HCT116 (cell line): ENCODE measurements at regions of chr5 and their contacts with region 1.

Region 1: GRCh38 chr5:150449517-150450339 is at the start of gene RPS14:
- DNase-seq: peak; percentile 89
- ATAC-seq: peak; percentile 88
- H3K4me3 ChIP-seq: peak within 1 kb of the TSS; percentile 94 to 96
- H3K27ac ChIP-seq: peak within 1 kb of the TSS; percentile 86
- H3K4me1 ChIP-seq: peaks cover 3 to 26% of the 10 kb centered on the region in 2 experiments; a peak in 3 of 4 replicates
- H3K27me3 ChIP-seq: no peaks in the 10 kb centered on the region
- CTCF ChIP-seq: peak in 2 of 3 experiments; percentile 81 to 83; a peak in 4 of 6 replicates
- POLR2A ChIP-seq: peak; percentile 77
- RAD21 ChIP-seq: no peak
- total RNA-seq, gene RPS14: 2,557 TPM

Region 2: DNA sequence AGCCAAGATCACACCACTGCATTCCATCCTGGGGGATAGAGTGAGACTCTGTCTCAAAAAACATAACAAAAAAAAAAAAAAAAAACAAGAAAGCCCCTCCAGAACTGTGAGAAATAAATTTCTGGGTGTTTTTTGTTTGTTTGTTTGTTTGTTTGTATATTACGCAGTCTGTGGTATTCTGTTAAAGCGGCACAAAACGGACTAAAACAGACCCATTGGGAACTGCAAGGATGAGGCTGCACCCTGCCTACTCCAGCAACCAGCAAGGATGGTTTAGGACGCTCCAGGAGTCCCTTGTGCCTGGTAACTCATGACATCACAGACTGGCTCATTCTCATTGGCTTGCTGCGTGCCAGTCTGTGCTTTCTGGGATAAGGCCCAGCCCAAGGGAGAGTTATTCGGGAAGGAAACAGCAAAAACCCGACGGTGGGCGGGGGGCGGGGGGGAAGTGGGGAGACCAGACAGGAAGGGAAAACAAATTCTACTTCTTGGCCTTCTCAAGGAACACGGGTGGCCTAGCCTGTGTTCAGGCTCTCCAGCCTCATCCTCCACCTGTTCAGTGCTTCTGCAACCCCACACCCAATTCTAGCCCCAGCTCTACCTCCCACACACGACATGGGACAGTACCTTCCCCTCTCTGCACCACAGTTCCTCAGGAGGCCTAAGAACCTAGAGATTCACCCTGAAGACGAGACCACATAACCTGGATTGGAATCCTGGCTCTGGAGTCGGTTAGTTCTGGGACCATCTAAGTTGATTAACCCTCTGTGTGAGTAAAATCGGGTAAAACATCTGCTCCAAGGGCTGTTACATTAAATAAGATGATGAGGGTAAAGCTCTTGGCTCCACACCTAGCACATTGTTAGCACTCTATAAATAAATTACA is 39.8 kb before region 1 on chr5:
- CTCF ChIA-PET with region 1: no interaction called
- POLR2A ChIA-PET with region 1: no interaction called
- RAD21 ChIA-PET with region 1: no interaction called
- intact Hi-C with region 1: no loop called
- DNase-seq: peak; percentile 81
- ATAC-seq: peak; percentile 99
- H3K4me3 ChIP-seq: peak overlapping the region; percentile 15 to 19; a peak in 2 of 4 replicates
- H3K27ac ChIP-seq: no peak overlapping the region
- H3K4me1 ChIP-seq: peaks cover 10 to 31% of the 10 kb centered on the region in 2 experiments; a peak in 3 of 4 replicates
- H3K27me3 ChIP-seq: no peaks in the 10 kb centered on the region
- CTCF ChIP-seq: no peak
- POLR2A ChIP-seq: no peak
- RAD21 ChIP-seq: no peak

Region 3: DNA sequence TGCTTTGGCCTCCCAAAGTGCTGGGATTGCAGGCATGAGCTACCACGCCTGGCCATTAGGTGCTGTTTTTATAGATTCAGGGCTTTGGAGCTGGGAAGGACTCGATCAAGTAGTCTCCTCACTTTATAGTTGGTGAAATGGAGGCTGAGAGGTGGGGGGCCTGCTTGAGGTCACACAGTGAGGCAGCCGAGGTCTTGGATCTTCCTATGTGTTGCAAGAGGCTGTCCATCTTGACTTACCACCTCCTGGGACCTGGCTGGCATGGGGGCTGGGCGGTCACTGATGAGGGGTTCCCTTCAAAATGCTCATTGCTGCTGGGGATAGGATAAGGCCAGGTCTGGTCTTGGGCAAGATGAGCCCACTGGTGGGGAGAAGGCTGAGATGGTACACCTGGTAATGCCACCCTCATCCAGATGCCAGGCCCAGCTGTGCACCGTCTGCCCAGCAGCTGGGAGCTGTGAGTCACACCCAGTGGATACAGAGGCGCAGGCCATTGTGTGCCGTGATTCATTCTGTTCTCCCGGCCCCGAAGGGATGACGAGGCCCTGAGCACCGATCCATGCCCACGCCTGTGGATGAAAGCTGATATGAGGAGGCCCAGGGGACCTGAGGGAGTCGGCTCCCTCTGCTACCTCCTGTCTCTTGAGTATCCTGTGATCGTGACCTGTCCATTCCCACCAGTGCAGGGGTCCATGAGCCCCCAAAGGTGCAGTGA is 47.7 kb after region 1 on chr5:
- CTCF ChIA-PET with region 1: no interaction called
- POLR2A ChIA-PET with region 1: interaction called, 10 read pairs
- RAD21 ChIA-PET with region 1: no interaction called
- intact Hi-C with region 1: no loop called
- DNase-seq: peak; percentile 81
- ATAC-seq: peak; percentile 98
- H3K4me3 ChIP-seq: peak overlapping the region; percentile 22 to 29
- H3K27ac ChIP-seq: peak overlapping the region; percentile 56
- H3K4me1 ChIP-seq: peaks cover 31 to 51% of the 10 kb centered on the region in 2 experiments
- H3K27me3 ChIP-seq: no peaks in the 10 kb centered on the region
- CTCF ChIP-seq: no peak; a peak in 1 of 6 replicates
- POLR2A ChIP-seq: no peak
- RAD21 ChIP-seq: no peak

Region 4: DNA sequence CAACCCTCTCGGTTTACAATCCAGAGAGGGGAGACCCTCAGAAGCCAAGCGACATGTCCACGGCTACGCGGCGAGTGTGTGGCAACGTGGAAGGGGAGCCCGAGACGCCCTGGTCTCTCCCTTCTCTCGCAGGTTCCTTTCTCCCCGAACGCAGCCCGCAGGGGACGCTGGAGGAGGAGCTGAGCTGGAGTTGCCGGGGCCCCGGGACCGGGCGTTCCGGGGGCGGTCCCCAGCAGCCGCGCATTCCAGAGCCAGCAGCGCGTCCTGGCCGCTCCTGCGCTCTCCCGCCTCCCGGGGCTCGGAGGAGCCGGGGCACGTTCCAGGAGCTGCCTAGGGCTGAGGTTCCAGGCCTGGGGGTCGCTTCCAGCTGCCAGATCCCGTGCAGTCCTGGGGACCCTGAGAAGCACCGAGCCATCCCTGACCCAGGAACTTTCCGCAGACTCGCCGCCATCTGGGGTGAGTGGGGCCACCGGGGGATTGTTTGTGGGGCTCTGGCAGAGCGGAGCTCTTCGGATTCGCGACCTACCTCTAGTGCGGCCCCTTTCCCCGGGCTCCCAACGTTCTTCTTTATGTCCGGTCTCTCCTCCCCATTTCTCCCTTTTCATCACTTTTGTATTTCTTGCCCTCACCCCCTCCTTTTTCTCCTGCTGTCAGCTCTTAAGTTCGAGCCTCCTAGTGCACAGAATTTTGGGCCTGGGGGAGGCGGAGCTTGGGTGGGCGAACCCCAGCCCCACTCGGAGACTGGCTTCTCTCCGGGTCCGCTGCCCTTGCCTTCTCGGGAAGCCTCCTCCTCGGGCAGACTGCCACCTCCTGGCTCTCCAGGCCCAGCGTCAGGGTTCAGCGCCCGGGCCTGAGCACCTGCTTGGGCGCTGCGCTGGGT is 329.0 kb after region 1 on chr5 and contains the start of gene SMIM3:
- CTCF ChIA-PET with region 1: interaction called, 3 read pairs
- POLR2A ChIA-PET with region 1: interaction called, 3 read pairs
- RAD21 ChIA-PET with region 1: no interaction called
- intact Hi-C with region 1: loop called (anchors 10 kb)
- DNase-seq: no peak
- ATAC-seq: peak; percentile 85
- H3K4me3 ChIP-seq: peak within 1 kb of the TSS; percentile 74 to 85
- H3K27ac ChIP-seq: peak within 1 kb of the TSS; percentile 89
- H3K4me1 ChIP-seq: peaks cover 42 to 58% of the 10 kb centered on the region in 2 experiments
- H3K27me3 ChIP-seq: no peaks in the 10 kb centered on the region
- CTCF ChIP-seq: peak in 2 of 3 experiments; percentile 56 to 62; a peak in 4 of 6 replicates
- POLR2A ChIP-seq: peak; percentile 70
- RAD21 ChIP-seq: no peak
- total RNA-seq, gene SMIM3: 35.4 TPM